Thyroid gland (tissue), 4 donors: ENCODE measurements at regions of chr19 and their contacts with region 1.

Region 1: DNA sequence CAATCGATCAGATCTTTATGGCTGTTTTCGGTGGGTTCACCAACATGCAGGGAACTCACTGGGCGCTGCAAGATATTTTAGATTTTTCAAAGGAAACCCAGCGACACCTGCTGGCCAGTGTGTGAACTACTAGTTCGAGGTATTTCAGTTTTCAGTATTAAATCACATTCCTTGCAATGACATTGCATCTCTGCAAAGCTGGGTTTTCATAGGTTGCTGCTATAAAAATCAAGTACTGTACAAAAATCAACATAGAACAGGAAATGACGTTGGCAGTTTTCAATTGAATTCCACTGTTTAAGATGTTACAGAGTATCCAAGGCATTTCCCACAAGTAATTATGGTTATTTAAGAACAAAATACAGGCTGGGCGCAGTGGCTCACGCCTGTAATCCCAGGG is 17.6 kb downstream of the LIG1 start:
- DNase-seq: peak; percentile 52 to 70
- H3K4me3 ChIP-seq: no peak overlapping the region
- H3K27ac ChIP-seq: peak overlapping the region in 1 of 3 donors; percentile 64
- H3K4me1 ChIP-seq: no peaks in the 10 kb centered on the region
- H3K27me3 ChIP-seq: no peaks in the 10 kb centered on the region
- CTCF ChIP-seq: peak in 5 of 6 experiments; percentile 82 to 91 (median 82)
- POLR2A ChIP-seq: no peak

Region 2: GRCh38 chr19:48064509-48064908 is 88.0 kb before region 1 on chr19:
- intact Hi-C with region 1: no loop called
- DNase-seq: no peak
- H3K4me3 ChIP-seq: no peak overlapping the region
- H3K27ac ChIP-seq: no peak overlapping the region
- H3K4me1 ChIP-seq: no peaks in the 10 kb centered on the region
- H3K27me3 ChIP-seq: no peaks in the 10 kb centered on the region
- CTCF ChIP-seq: no peak
- POLR2A ChIP-seq: no peak

Region 3: DNA sequence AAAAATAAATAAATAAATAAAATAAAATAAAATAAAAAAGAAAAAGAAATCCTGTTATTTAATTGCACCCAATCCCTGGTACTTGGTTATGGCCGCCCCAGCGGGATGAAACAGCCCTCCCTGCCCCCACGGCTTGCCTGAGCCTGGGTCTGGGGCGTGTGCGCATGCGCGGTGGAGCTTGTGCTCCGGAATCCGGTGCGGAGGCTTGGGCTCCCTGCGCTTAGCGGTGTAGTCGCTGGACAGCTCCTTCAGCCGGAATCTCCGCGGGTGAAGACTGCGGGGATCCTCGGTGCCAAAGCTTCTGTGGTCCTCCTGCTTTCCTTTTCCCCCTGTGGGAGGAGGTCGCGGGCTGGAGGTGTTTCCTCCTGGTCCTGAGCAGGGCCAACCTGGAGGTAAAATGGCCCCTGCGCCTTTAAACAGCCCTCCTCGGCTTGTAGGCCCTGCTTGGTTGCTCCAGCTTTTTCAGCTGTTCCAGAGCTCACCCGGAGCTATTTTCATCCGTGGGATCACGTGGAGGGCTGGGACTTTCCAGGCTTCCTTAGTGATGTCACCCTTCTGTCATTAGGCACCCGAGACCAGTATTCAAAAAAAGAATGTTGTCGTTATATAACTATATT is 42.1 kb before region 1 on chr19 and contains the start of gene PLA2G4C:
- intact Hi-C with region 1: loop called (anchors 5 kb)
- DNase-seq: peak; percentile 90 to 95
- H3K4me3 ChIP-seq: peak within 1 kb of the TSS in 2 of 3 donors; percentile 21 to 23
- H3K27ac ChIP-seq: peak within 1 kb of the TSS; percentile 95 to 99 (median 97)
- H3K4me1 ChIP-seq: peaks cover 8 to 31% of the 10 kb centered on the region in 2 donors
- H3K27me3 ChIP-seq: no peaks in the 10 kb centered on the region
- CTCF ChIP-seq: peak in 1 of 6 experiments; percentile 3
- POLR2A ChIP-seq: peak; percentile 24 to 57
- total RNA-seq, gene PLA2G4C: 4.8 to 17.7 (median 10.5) TPM